CD8-positive, alpha-beta T cell (primary cell): ENCODE measurements at regions of chr20 and their contacts with region 1.

Region 1: DNA sequence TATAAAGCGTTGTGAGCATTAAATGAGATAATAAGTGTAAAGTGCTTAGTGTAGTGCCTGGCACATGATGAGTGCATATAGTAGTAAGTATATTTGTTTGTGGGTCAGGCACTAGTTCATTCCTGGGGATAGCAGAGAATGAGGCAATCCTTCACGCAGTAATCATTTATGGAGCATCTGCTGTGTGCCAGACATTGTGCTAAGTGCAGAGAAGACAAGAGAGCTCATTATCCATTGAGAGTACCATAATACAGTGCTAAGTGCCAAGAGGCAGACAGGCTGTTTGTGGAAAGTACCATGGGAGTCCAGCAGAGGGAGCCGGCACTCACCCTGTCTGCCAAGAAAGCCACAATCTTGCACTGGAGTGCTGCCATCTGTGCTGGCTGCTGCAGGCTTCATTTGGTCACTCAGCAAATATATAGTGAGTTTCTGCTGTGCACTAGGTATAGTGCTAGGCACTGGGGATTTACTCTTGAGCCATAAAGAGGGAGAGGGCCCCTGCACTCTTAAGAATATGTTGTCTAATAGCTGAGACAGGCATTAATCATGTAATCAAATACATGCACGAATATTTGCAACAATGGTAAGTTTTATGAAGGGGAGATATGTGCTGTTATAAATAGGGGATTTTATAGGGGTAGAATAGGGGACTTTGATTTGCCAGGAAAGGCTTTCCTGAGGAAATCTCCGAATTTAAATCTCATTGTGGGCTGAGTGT is 12.9 kb upstream of the MROH8 start:
- DNase-seq: peak; percentile 46 to 80 (median 72)
- ATAC-seq: peak; percentile 80
- H3K4me3 ChIP-seq: no peak overlapping the region
- H3K4me3 Mint-ChIP-seq: no peak overlapping the region
- H3K27ac ChIP-seq: no peak overlapping the region
- H3K27ac Mint-ChIP-seq: no peak overlapping the region
- H3K4me1 ChIP-seq: peaks cover 48% of the 10 kb centered on the region
- H3K4me1 Mint-ChIP-seq: peaks cover 79% of the 10 kb centered on the region
- H3K27me3 ChIP-seq: no peaks in the 10 kb centered on the region
- H3K27me3 Mint-ChIP-seq: no peaks in the 10 kb centered on the region
- CTCF ChIP-seq: peak; percentile 95

Region 2: DNA sequence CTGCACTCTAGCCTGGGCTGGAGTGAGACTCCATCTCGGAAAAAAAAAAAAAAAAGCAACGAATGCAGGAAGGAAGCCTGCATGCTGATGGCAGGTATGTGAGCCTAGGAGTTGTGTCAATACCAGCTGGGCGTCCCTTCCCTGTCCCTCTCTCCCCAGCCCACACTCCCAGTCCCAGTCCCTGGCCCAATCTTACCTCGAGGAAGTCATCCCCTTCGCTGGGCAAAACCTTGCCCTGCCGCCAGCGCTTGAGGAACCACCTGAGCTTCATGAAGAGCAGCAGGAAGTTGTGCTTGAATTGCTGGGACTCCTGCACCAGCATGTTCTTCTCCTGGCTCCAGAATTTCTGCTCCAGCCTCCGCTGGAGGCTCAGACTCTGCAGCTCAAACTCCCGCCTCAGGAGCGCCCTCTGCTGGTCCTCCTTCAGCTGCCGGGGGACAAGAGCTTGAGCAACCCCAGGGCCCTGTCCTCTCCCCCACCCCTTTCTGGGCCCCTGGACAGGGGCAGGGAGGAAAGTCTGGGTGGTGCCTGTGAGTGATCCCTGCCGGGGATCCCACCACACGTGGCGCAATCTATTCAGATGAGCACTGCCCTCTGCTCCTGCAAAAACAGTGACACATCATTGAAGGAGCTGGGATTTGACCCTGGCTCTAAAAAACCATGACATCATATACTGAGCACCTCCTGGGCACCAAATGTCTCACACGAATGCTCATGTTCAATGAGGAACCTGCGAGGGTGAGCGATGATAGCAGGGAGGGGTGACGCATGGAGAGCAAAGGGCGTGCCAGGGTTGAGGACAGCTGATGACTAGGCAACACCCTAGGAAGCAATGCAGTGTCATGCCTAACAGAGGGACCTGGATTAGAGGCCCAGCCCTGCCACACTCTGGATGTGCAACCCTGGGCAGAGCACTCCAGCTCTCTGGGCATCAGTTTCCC is 383.7 kb before region 1 on chr20:
- CTCF ChIA-PET with region 1: no interaction called
- POLR2A ChIA-PET with region 1: no interaction called
- intact Hi-C with region 1: no loop called
- DNase-seq: peak; percentile 49 to 80 (median 72)
- ATAC-seq: peak; percentile 51
- H3K4me3 ChIP-seq: no peak overlapping the region
- H3K4me3 Mint-ChIP-seq: no peak overlapping the region
- H3K27ac ChIP-seq: no peak overlapping the region
- H3K27ac Mint-ChIP-seq: no peak overlapping the region
- H3K4me1 ChIP-seq: no peaks in the 10 kb centered on the region
- H3K4me1 Mint-ChIP-seq: peaks cover 2% of the 10 kb centered on the region
- H3K27me3 ChIP-seq: no peaks in the 10 kb centered on the region
- H3K27me3 Mint-ChIP-seq: no peaks in the 10 kb centered on the region
- CTCF ChIP-seq: peak; percentile 79

Region 3: DNA sequence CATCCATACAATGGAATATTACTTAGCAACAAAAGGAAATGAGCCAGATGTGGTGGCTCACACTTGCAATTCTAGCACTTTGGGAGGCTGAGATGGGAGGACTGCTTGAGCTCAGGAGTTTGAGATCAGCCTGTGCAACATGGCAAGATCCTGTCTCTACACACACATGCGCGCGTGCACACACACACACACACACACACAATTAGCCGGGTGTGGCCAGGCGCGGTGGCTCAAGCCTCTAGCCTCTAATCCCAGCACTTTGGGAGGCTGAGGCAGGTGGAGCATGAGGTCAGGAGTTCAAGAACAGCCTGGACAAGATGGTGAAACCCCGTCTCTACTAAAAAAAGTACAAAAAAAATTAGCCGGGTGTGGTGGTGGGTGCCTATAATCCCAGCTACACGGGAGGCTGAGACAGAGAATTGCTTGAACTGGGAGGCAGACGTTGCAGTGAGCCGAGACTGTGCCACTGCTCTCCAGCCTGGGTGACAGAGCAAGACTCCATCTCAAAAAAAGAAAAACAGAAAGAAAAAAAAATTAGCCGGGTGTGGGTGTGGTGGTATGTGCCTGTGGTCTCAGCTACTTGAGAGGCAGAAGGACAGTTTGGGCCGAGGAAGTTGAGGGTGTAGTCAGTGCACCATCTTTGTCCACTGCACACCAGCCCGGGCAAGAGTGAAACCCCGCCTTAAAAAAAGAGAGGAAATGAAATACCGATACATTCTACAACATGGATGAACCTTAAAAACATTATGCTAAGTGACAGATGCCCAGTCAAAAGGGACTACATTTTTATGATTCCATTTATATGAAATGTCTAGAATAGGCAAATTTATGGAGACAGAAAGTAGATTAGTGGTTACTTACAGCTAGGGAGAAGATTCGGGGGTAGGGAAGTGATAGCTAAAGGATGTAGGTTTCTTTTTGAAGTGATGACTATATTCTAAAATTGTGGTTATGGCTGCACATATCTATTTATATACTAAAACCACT is 149.0 kb before region 1 on chr20:
- CTCF ChIA-PET with region 1: no interaction called
- POLR2A ChIA-PET with region 1: no interaction called
- intact Hi-C with region 1: no loop called
- DNase-seq: peak in 8 of 9 experiments; percentile 4 to 70 (median 34)
- ATAC-seq: peak; percentile 79
- H3K4me3 ChIP-seq: peak overlapping the region; percentile 24 to 36
- H3K4me3 Mint-ChIP-seq: peak overlapping the region; percentile 84
- H3K27ac ChIP-seq: peak overlapping the region; percentile 49 to 65
- H3K27ac Mint-ChIP-seq: peak overlapping the region; percentile 89
- H3K4me1 ChIP-seq: peaks cover 15% of the 10 kb centered on the region
- H3K4me1 Mint-ChIP-seq: peaks cover 26% of the 10 kb centered on the region
- H3K27me3 ChIP-seq: no peaks in the 10 kb centered on the region
- H3K27me3 Mint-ChIP-seq: no peaks in the 10 kb centered on the region
- CTCF ChIP-seq: no peak

Region 4: DNA sequence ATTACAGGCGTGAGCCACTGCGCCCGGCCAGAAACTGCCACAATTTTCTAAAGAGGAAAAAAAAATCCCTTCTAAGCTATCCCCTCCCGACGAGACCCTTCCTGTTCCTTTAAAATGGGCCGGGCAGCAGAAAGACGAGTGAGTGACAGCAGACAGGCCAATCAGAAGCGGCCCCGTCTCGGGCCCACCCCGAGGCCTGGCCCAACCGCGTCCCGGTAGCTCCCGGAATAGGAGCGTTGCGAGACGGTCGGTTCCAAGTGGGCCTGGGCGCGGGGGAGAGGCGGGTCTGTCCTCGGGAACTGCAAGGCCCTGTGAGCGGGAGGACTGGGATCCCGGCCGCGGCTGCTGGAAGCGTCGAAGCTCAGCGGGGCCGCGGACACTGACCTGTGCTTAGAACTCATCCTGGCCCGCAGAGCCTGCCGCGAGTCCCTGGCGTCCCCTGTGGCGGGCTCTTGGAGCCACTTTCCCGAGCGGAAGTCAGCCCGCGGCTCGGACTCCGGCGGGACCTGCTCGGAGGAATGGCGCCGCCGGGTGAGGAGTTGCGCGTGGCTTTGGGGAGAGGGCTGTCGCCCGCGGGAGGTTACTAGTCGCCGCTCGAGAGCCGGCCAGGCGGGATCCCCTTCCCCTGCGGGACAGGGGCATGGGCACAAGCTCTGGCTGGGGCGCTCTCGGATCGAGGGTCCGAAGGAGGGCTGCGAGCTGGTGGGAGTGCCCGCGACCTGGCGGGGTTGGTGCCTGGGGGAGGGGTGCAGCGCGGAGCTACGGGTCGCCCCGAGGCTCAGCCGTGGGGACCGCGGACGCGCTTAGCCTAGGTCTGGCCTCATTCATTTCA is 13.2 kb before region 1 on chr20 and contains the starts of genes MROH8 and RPN2:
- CTCF ChIA-PET with region 1: interaction called, 39 read pairs
- POLR2A ChIA-PET with region 1: interaction called, 13 read pairs
- intact Hi-C with region 1: loop called (anchors 2 kb)
- DNase-seq: peak; percentile 88 to 97 (median 94)
- ATAC-seq: peak; percentile 92
- H3K4me3 ChIP-seq: peak within 1 kb of the TSS; percentile 95 to 98
- H3K4me3 Mint-ChIP-seq: peak within 1 kb of the TSS; percentile 98
- H3K27ac ChIP-seq: peak within 1 kb of the TSS; percentile 94 to 96
- H3K27ac Mint-ChIP-seq: peak within 1 kb of the TSS; percentile 98
- H3K4me1 ChIP-seq: peaks cover 26% of the 10 kb centered on the region
- H3K4me1 Mint-ChIP-seq: peaks cover 44% of the 10 kb centered on the region
- H3K27me3 ChIP-seq: no peaks in the 10 kb centered on the region
- H3K27me3 Mint-ChIP-seq: no peaks in the 10 kb centered on the region
- CTCF ChIP-seq: no peak
- total RNA-seq, gene MROH8: 0.60 to 1.1 TPM
- total RNA-seq, gene RPN2: 60.8 to 68.8 TPM

Region 5: GRCh38 chr20:37209661-37210314 is 17.5 kb after region 1 on chr20:
- CTCF ChIA-PET with region 1: interaction called, 10 read pairs
- POLR2A ChIA-PET with region 1: interaction called, 4 read pairs
- intact Hi-C with region 1: no loop called
- DNase-seq: no peak
- ATAC-seq: no peak
- H3K4me3 ChIP-seq: no peak overlapping the region
- H3K4me3 Mint-ChIP-seq: no peak overlapping the region
- H3K27ac ChIP-seq: no peak overlapping the region
- H3K27ac Mint-ChIP-seq: no peak overlapping the region
- H3K4me1 ChIP-seq: no peaks in the 10 kb centered on the region
- H3K4me1 Mint-ChIP-seq: no peaks in the 10 kb centered on the region
- H3K27me3 ChIP-seq: no peaks in the 10 kb centered on the region
- H3K27me3 Mint-ChIP-seq: no peaks in the 10 kb centered on the region
- CTCF ChIP-seq: no peak

Region 6: DNA sequence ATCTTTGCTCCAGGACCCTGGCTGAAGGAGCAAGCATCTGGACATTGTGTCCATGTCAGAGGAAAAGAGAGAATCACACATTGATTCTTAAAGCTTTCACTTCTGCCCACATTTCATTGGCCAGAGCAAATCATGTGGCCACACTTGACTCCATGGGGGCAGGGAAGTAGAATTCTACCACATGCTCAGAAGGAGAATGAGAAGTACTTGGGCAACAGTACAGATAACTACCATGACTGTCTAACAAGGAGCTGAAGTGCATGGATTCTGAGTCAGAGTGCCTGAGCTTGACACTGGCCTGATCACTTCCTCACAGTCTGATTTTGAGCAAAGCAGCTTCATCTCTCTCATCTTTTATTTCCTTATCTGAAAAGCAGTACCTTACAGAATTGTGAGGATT is 30.8 kb after region 1 on chr20:
- CTCF ChIA-PET with region 1: interaction called, 12 read pairs
- POLR2A ChIA-PET with region 1: no interaction called
- intact Hi-C with region 1: no loop called
- DNase-seq: peak in 1 of 9 experiments; percentile 30
- ATAC-seq: no peak
- H3K4me3 ChIP-seq: no peak overlapping the region
- H3K4me3 Mint-ChIP-seq: no peak overlapping the region
- H3K27ac ChIP-seq: no peak overlapping the region
- H3K27ac Mint-ChIP-seq: no peak overlapping the region
- H3K4me1 ChIP-seq: no peaks in the 10 kb centered on the region
- H3K4me1 Mint-ChIP-seq: peaks cover 2% of the 10 kb centered on the region
- H3K27me3 ChIP-seq: no peaks in the 10 kb centered on the region
- H3K27me3 Mint-ChIP-seq: no peaks in the 10 kb centered on the region
- CTCF ChIP-seq: no peak

Region 7: GRCh38 chr20:37336369-37337207 is 144.3 kb after region 1 on chr20:
- CTCF ChIA-PET with region 1: no interaction called
- POLR2A ChIA-PET with region 1: no interaction called
- intact Hi-C with region 1: no loop called
- DNase-seq: peak in 5 of 9 experiments; percentile 18 to 65 (median 27)
- ATAC-seq: peak; percentile 66
- H3K4me3 ChIP-seq: no peak overlapping the region
- H3K4me3 Mint-ChIP-seq: no peak overlapping the region
- H3K27ac ChIP-seq: no peak overlapping the region
- H3K27ac Mint-ChIP-seq: peak overlapping the region; percentile 27
- H3K4me1 ChIP-seq: peaks cover 11% of the 10 kb centered on the region
- H3K4me1 Mint-ChIP-seq: peaks cover 13% of the 10 kb centered on the region
- H3K27me3 ChIP-seq: no peaks in the 10 kb centered on the region
- H3K27me3 Mint-ChIP-seq: no peaks in the 10 kb centered on the region
- CTCF ChIP-seq: no peak

Region 8: GRCh38 chr20:37384683-37385174 is 192.4 kb after region 1 on chr20:
- CTCF ChIA-PET with region 1: interaction called, 14 read pairs
- POLR2A ChIA-PET with region 1: no interaction called
- intact Hi-C with region 1: loop called in 1 of 2 experiments (anchors 2 kb)
- DNase-seq: peak; percentile 65 to 91 (median 74)
- ATAC-seq: peak; percentile 95
- H3K4me3 ChIP-seq: peak overlapping the region; percentile 41 to 46
- H3K4me3 Mint-ChIP-seq: peak overlapping the region; percentile 85
- H3K27ac ChIP-seq: no peak overlapping the region
- H3K27ac Mint-ChIP-seq: no peak overlapping the region
- H3K4me1 ChIP-seq: peaks cover 5% of the 10 kb centered on the region
- H3K4me1 Mint-ChIP-seq: peaks cover 8% of the 10 kb centered on the region
- H3K27me3 ChIP-seq: no peaks in the 10 kb centered on the region
- H3K27me3 Mint-ChIP-seq: peaks cover 3% of the 10 kb centered on the region
- CTCF ChIP-seq: peak; percentile 79